IMR-90 (cell line): ENCODE measurements at regions of chr17 and their contacts with region 1.

Region 1: GRCh38 chr17:56715613-56716357 is 117.9 kb downstream of the C17orf67 start:
- DNase-seq: peak; percentile 82
- ATAC-seq: peak; percentile 98
- H3K4me3 ChIP-seq: no peak overlapping the region
- H3K27ac ChIP-seq: no peak overlapping the region
- H3K4me1 ChIP-seq: peaks cover 6% of the 10 kb centered on the region
- H3K27me3 ChIP-seq: no peaks in the 10 kb centered on the region; the same call in 1 of the 2 replicates
- CTCF ChIP-seq: peak; percentile 90
- POLR2A ChIP-seq: no peak; the same call in 1 of the 2 replicates
- RAD21 ChIP-seq: peak; percentile 97

Region 2: GRCh38 chr17:56125830-56126819 is 589.7 kb before region 1 on chr17:
- CTCF ChIA-PET with region 1: no interaction called
- POLR2A ChIA-PET with region 1: no interaction called
- dilution Hi-C with region 1: no loop called
- in situ Hi-C with region 1: loop called (anchors 10 kb)
- intact Hi-C with region 1: loop called (anchors 5 kb)
- DNase-seq: peak; percentile 74
- ATAC-seq: peak; percentile 75
- H3K4me3 ChIP-seq: no peak overlapping the region
- H3K27ac ChIP-seq: no peak overlapping the region
- H3K4me1 ChIP-seq: peaks cover 1% of the 10 kb centered on the region; the same call in 1 of the 2 replicates
- H3K27me3 ChIP-seq: no peaks in the 10 kb centered on the region
- CTCF ChIP-seq: peak; percentile 79
- POLR2A ChIP-seq: no peak
- RAD21 ChIP-seq: peak; percentile 88

Region 3: DNA sequence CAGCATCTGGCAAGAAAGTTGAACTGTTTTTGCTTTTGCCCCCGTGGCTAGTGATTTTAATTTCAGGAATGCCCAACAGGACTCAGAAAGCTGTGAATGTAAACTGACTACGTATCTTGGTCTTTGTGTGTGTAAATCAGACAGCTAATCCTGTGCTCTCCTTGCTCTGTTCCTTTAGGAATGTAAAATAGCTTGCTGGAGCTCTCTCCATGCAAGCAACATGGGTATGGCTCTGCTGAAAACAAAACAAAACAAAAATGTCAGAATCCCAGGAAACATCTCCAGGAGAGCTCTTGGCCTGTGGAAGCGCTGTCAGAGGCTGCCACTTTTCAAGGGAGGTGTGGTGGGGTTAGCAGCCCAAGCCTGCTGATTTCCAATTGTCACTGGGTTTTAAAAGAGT is 284.0 kb before region 1 on chr17:
- CTCF ChIA-PET with region 1: no interaction called
- POLR2A ChIA-PET with region 1: no interaction called
- dilution Hi-C with region 1: no loop called
- in situ Hi-C with region 1: no loop called
- intact Hi-C with region 1: loop called (anchors 10 kb)
- DNase-seq: peak; percentile 55
- ATAC-seq: peak; percentile 96
- H3K4me3 ChIP-seq: no peak overlapping the region
- H3K27ac ChIP-seq: no peak overlapping the region
- H3K4me1 ChIP-seq: 0 out of 2 replicates have a peak, but pooled peaks cover 1% of the 10 kb centered on the region
- H3K27me3 ChIP-seq: no peaks in the 10 kb centered on the region
- CTCF ChIP-seq: no peak
- POLR2A ChIP-seq: no peak
- RAD21 ChIP-seq: no peak

Region 4: GRCh38 chr17:56679115-56679766 is 36.5 kb before region 1 on chr17:
- CTCF ChIA-PET with region 1: interaction called, 4 read pairs
- POLR2A ChIA-PET with region 1: no interaction called
- dilution Hi-C with region 1: no loop called
- in situ Hi-C with region 1: no loop called
- intact Hi-C with region 1: loop called (anchors 1 kb)
- DNase-seq: peak; percentile 56
- ATAC-seq: peak; percentile 65
- H3K4me3 ChIP-seq: no peak overlapping the region
- H3K27ac ChIP-seq: no peak overlapping the region
- H3K4me1 ChIP-seq: peaks cover 6% of the 10 kb centered on the region
- H3K27me3 ChIP-seq: peaks cover 30% of the 10 kb centered on the region
- CTCF ChIP-seq: peak; percentile 58
- POLR2A ChIP-seq: no peak
- RAD21 ChIP-seq: peak; percentile 54

Region 5: DNA sequence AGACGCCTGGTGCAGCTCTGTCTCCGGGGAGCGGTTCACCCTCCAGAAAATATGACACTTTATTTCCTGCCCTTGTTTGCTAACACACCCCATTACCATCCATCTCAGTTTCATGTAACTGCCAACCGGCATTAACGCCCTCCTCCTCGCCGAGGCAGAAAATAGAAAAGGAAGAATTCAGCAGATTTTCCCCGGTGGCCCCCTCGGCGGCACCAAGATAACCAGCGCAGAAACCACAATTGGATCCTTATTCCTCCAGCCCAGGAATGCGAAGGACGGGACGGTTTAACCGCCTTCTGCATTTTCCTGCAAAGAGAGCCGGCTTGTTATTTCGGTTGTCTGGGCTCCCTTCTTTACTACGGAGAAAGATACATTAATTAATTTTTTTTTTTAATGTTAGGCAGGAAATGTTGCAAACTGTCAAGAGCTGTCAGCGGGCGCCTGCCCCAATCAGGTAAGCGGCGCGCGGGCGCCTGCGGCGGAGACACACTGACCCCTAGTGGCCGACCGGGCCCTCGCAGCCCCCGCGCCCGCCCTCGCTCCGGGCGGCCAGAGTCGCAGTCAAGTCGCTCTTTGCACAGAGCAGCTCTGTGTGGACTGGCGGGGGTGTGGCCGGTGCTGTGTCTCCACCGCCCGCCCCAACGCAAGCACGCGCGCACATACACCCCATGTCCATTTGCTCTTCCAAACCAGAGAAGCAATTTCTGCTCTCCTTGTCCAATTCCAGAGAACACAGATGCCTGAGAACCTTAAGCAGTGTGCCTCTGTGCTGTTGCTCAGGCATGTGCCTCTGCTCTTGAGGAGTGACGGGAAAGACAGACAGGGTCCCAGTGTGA is 64.3 kb after region 1 on chr17:
- CTCF ChIA-PET with region 1: interaction called, 30 read pairs
- POLR2A ChIA-PET with region 1: no interaction called
- dilution Hi-C with region 1: no loop called
- in situ Hi-C with region 1: loop called (anchors 10 kb)
- intact Hi-C with region 1: loop called (anchors 1 kb)
- DNase-seq: peak; percentile 66
- ATAC-seq: peak; percentile 97
- H3K4me3 ChIP-seq: peak overlapping the region; percentile 28
- H3K27ac ChIP-seq: peak overlapping the region; percentile 0; the same call in 1 of the 2 replicates
- H3K4me1 ChIP-seq: peaks cover 6% of the 10 kb centered on the region
- H3K27me3 ChIP-seq: no peaks in the 10 kb centered on the region
- CTCF ChIP-seq: peak; percentile 98
- POLR2A ChIP-seq: 0 out of 2 replicates have a peak, but pooled peaks have one; percentile 26
- RAD21 ChIP-seq: peak; percentile 96

Region 6: DNA sequence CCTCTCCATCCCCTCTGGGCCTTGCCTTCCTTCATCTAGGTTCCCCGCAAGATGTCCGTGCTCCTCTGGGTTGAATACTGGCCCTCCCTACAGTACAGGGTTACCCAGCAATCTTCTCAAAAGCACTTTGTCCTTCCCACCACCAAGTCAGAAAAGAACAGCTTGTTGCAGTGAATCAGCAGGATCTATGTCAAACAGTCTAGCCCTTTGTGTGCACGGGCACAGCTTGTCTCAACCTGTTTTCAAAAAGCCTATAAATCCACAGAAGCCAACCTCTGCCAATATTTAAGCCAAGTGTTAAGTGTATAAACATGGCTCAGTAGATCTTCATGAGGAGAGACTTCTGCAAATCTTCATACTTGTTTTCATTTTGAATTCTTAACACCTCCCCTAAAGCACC is 92.7 kb after region 1 on chr17:
- CTCF ChIA-PET with region 1: no interaction called
- POLR2A ChIA-PET with region 1: no interaction called
- dilution Hi-C with region 1: no loop called
- in situ Hi-C with region 1: no loop called
- intact Hi-C with region 1: no loop called
- DNase-seq: no peak
- ATAC-seq: peak; percentile 35; the same call in 1 of the 2 replicates
- H3K4me3 ChIP-seq: no peak overlapping the region
- H3K27ac ChIP-seq: no peak overlapping the region
- H3K4me1 ChIP-seq: peaks cover 4% of the 10 kb centered on the region; the same call in 1 of the 2 replicates
- H3K27me3 ChIP-seq: no peaks in the 10 kb centered on the region
- CTCF ChIP-seq: no peak
- POLR2A ChIP-seq: no peak
- RAD21 ChIP-seq: no peak

Region 7: DNA sequence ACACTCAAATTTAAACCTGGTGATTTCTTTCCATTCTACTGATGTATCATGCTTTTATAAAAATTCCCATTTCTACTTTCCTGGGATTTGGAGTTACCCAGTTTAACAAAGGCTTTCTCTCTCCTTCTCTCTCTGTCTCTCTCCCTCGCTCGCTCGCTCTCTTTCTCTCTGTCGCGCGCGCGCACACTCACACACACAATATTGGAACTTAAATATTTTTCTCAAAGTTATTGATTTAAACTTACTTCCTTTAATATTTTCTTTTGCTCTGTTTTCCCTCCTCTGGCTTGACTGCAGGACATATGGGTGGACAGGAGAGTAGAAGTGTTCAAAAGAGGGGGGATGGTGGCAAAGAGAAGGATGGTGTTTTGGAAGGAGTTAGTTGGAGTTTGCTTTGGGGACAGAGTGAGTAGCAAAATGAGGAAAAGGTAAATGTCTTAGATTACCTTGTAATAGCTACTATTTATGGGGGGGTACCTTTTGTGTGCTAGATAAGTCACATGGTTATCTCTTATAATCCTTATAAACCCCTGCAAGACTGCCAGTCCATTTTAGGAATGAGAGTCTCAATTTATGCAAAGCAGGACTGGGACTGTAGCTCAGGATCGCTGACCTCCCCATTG is 199.0 kb after region 1 on chr17:
- CTCF ChIA-PET with region 1: no interaction called
- POLR2A ChIA-PET with region 1: no interaction called
- dilution Hi-C with region 1: no loop called
- in situ Hi-C with region 1: no loop called
- intact Hi-C with region 1: no loop called
- DNase-seq: no peak
- ATAC-seq: no peak; the same call in 1 of the 2 replicates
- H3K4me3 ChIP-seq: peak overlapping the region; percentile 92
- H3K27ac ChIP-seq: peak overlapping the region; percentile 88
- H3K4me1 ChIP-seq: peaks cover 17% of the 10 kb centered on the region
- H3K27me3 ChIP-seq: no peaks in the 10 kb centered on the region
- CTCF ChIP-seq: no peak
- POLR2A ChIP-seq: no peak
- RAD21 ChIP-seq: no peak

Region 8: DNA sequence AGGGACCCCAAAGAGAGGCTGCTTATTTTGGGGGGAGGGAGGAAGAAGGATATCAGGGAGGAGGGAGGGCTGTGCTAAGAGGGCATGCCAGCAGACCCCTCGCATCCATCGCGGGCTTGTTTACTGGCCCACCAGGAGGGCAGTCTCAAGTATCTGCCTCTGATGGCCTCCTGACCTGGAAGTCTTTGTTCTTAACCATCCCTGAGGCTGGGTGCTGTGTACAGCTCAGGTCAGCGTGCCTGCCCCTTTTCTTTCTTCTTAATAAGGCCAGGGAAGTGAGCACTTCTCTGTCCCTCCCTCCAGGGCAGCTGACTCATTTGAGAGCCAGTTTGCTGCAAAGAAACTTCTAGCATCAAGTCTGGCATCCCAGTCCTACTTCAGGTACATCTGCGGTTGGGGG is 872.3 kb after region 1 on chr17:
- CTCF ChIA-PET with region 1: no interaction called
- POLR2A ChIA-PET with region 1: no interaction called
- dilution Hi-C with region 1: no loop called
- in situ Hi-C with region 1: no loop called
- intact Hi-C with region 1: no loop called
- DNase-seq: no peak
- ATAC-seq: no peak; the same call in 1 of the 2 replicates
- H3K4me3 ChIP-seq: no peak overlapping the region
- H3K27ac ChIP-seq: no peak overlapping the region
- H3K4me1 ChIP-seq: no peaks in the 10 kb centered on the region
- H3K27me3 ChIP-seq: no peaks in the 10 kb centered on the region; the same call in 1 of the 2 replicates
- CTCF ChIP-seq: no peak
- POLR2A ChIP-seq: no peak
- RAD21 ChIP-seq: no peak